ENCODE measurements at regions of chr22 and their contacts with region 1.

Region 1: GRCh38 chr22:37643225-37643847 is 3.9 kb downstream of the SH3BP1 start:
- DNase-seq: no peak
- H3K4me3 ChIP-seq: no peak overlapping the region
- CTCF ChIP-seq: peak; percentile 89

Region 2: DNA sequence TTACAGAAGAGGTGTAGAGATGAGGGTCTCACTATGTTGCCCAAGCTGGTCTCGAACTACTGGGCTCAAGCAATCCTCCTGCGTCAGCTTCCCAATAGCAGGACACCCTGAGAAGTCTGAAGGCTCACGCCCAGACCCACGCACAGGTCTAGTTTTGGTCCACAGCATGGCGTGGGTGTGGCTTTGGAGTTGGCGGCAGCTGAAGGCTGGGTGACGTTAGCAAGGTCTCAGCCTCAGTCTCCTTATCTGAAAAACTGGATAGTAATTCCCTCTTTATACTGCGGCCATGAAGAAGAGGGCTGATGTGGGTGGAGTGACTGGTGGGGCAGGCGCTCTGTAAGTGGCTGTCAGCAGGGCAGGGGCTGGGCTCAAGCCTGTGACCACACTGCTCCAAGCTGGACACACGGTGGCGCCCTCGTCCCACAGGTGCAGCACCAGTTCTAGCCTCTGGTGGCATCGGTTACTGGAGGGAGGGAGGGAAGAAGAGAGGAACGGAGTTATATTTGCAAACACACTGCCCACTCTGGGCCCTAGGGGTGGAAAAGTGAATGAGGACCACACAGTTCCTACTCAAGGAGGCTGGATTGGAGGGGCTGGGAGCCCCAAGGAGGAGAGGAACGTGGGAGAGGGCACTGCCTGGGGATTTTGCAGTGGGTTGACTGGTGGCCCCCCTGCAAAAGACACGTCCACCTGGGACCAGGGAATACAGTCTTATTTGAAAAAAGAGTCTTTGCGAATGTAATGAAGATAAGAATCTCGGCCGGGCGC is 104.6 kb before region 1 on chr22:
- CTCF ChIA-PET with region 1: interaction called, 26 read pairs
- POLR2A ChIA-PET with region 1: no interaction called
- DNase-seq: peak; percentile 47
- H3K4me3 ChIP-seq: no peak overlapping the region
- CTCF ChIP-seq: peak; percentile 98

Region 3: DNA sequence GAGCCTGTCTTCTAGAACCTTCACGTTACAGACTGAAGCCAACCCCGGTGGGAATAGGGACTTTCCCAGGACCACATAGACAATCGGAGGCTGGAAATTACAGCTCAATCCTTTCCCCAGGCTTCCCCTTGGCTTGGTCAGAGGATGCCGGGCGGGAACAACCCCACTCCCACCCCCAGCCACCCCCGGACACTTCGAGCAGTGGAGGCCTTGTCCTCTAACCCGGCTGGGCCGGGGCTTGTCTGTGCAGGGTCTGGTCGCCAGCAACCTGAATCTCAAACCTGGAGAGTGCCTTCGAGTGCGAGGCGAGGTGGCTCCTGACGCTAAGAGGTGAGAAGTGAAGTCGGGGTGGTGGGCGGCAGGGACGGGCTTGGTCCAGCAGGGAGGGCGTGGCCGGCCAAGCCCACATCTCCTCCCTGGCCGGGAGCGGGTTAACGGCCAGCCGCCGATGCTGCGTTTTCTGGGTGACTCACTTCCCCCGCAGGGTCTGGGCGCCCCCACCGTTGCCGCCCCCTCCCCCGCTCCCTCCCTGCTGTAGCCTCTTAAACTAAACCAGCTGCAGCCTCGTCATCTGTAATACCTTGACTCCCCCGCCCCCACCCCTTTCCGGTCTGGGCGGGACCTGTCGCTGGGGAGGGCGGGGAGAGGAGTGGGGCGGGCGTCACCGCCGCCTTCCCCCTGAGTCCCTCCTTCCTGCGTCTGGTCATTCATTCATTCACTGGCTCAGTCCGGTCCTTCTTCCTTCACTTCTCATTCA is 33.6 kb after region 1 on chr22:
- CTCF ChIA-PET with region 1: interaction called, 430 read pairs
- POLR2A ChIA-PET with region 1: interaction called, 49 read pairs
- DNase-seq: peak; percentile 87
- H3K4me3 ChIP-seq: peak overlapping the region; percentile 97
- CTCF ChIP-seq: no peak

Region 4: GRCh38 chr22:37752466-37753087 is 109.2 kb after region 1 on chr22:
- CTCF ChIA-PET with region 1: interaction called, 16 read pairs
- POLR2A ChIA-PET with region 1: interaction called, 3 read pairs
- DNase-seq: peak; percentile 64
- H3K4me3 ChIP-seq: no peak overlapping the region
- CTCF ChIP-seq: peak; percentile 35

Region 5: GRCh38 chr22:37792494-37792893 is 149.2 kb after region 1 on chr22:
- CTCF ChIA-PET with region 1: interaction called, 131 read pairs
- POLR2A ChIA-PET with region 1: no interaction called
- DNase-seq: no peak
- H3K4me3 ChIP-seq: no peak overlapping the region
- CTCF ChIP-seq: no peak

Region 6: GRCh38 chr22:38097557-38098409 is 454.4 kb after region 1 on chr22:
- CTCF ChIA-PET with region 1: no interaction called
- POLR2A ChIA-PET with region 1: no interaction called
- DNase-seq: no peak
- H3K4me3 ChIP-seq: no peak overlapping the region
- CTCF ChIP-seq: peak; percentile 63

Measured in AG04449 (cell line).